Aorta (tissue), 5 donors: ENCODE measurements at regions of chr9 and their contacts with region 1.

Region 1: GRCh38 chr9:20356403-20357035 is 265.8 kb downstream of the MLLT3 start:
- DNase-seq: peak; percentile 60 to 78
- ATAC-seq: peak; percentile 85
- H3K4me3 ChIP-seq: peak overlapping the region; percentile 15 to 32
- H3K27ac ChIP-seq: peak overlapping the region; percentile 12 to 52
- H3K4me1 ChIP-seq: peaks cover 0 to 6% of the 10 kb centered on the region in 2 donors
- H3K27me3 ChIP-seq: no peaks in the 10 kb centered on the region

Region 2: GRCh38 chr9:20236676-20237075 is 119.8 kb before region 1 on chr9:
- intact Hi-C with region 1: no loop called
- DNase-seq: no peak
- ATAC-seq: no peak
- H3K4me3 ChIP-seq: no peak overlapping the region
- H3K27ac ChIP-seq: no peak overlapping the region
- H3K4me1 ChIP-seq: no peaks in the 10 kb centered on the region
- H3K27me3 ChIP-seq: no peaks in the 10 kb centered on the region

Region 3: DNA sequence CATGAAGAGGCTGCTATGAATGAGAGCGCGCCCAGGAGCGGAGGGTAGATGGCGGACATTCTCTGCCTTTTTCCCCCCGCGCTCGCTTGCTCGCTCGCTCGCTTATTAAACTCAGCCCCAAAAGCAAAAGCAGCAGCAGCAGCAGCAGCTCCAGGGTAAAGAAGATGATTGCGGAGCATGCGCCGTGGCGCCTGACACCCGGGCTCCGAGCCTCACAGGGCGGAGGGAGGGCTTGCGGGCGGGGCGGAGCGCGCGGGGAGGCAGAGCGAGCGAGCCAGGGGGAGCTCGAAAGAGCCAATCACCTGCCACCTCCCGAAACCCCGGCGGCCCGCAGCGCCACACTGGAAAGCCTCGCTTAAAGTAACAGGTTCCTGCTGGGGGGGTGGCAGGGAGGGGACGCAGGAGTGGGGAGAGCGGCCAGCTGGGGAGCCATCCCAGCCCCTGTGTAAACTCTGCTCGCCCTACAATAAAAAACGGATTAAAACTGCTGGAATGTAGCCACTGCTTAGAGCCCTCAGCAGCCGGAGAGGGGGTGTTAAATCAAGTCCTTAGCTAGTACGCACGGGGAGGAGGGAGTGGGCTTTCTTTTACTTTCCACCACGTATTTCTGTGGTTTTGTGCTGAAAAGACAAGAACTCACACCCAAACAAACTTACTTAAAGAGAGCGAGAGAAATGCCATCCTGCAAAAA is 266.0 kb after region 1 on chr9 and contains the start of gene MLLT3:
- intact Hi-C with region 1: loop called (anchors 5 kb)
- DNase-seq: peak; percentile 97 to 98
- ATAC-seq: peak; percentile 97
- H3K4me3 ChIP-seq: peak within 1 kb of the TSS; percentile 70 to 82
- H3K27ac ChIP-seq: peak within 1 kb of the TSS in 1 of 2 donors; percentile 50
- H3K4me1 ChIP-seq: peaks cover 0 to 3% of the 10 kb centered on the region in 2 donors
- H3K27me3 ChIP-seq: no peaks in the 10 kb centered on the region
- total RNA-seq, gene MLLT3: 8.1 to 16.5 TPM

Region 4: GRCh38 chr9:20865347-20865746 is 508.8 kb after region 1 on chr9:
- intact Hi-C with region 1: loop called in 1 of 2 experiments (anchors 10 kb)
- DNase-seq: no peak
- ATAC-seq: no peak
- H3K4me3 ChIP-seq: no peak overlapping the region
- H3K27ac ChIP-seq: no peak overlapping the region
- H3K4me1 ChIP-seq: no peaks in the 10 kb centered on the region
- H3K27me3 ChIP-seq: no peaks in the 10 kb centered on the region

Region 5: DNA sequence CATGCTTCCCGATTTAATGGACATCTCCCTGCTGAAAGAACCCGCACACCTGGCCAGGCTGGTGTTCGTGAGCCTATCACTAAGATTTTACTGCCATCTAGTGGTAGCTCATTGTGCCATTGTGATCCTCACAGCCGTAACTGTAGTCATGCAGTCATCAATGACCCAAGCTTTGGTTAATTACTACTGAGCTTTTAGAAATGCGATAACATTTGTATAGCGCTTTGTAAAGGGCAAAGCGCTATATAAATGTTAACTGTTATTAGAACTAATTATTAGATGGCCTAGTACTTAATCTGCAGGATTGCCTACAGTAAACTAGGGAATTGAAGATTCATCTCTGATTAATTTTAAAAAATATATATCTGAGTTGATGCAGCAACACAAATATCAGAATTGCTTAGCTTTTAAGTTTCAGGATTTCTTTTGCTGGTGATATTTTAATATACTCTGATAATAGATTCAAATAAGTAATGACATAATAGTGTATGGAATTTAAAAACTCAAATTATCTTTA is 584.7 kb after region 1 on chr9:
- intact Hi-C with region 1: loop called (anchors 2 to 5 kb)
- DNase-seq: peak in 1 of 2 donors; percentile 44
- ATAC-seq: peak; percentile 87
- H3K4me3 ChIP-seq: no peak overlapping the region
- H3K27ac ChIP-seq: no peak overlapping the region
- H3K4me1 ChIP-seq: peaks cover 0 to 2% of the 10 kb centered on the region in 2 donors
- H3K27me3 ChIP-seq: no peaks in the 10 kb centered on the region